Heart left ventricle (tissue), 16 donors: ENCODE measurements at regions of chr17 and their contacts with region 1.

Region 1: GRCh38 chr17:17001874-17002520 is 30.1 kb upstream of the TNFRSF13B start:
- DNase-seq: peak; percentile 69 to 90 (median 77)
- ATAC-seq: peak; percentile 80 to 90 (median 84)
- H3K4me3 ChIP-seq: peak overlapping the region in 1 of 12 donors; percentile 2
- H3K27ac ChIP-seq: peak overlapping the region in 1 of 12 donors; percentile 9
- H3K4me1 ChIP-seq: peaks cover 0 to 8% (median 6%) of the 10 kb centered on the region in 12 donors
- H3K27me3 ChIP-seq: no peaks in the 10 kb centered on the region
- CTCF ChIP-seq: peak in 11 of 12 donors; percentile 95 to 100 (median 98)
- POLR2A ChIP-seq: no peak

Region 2: DNA sequence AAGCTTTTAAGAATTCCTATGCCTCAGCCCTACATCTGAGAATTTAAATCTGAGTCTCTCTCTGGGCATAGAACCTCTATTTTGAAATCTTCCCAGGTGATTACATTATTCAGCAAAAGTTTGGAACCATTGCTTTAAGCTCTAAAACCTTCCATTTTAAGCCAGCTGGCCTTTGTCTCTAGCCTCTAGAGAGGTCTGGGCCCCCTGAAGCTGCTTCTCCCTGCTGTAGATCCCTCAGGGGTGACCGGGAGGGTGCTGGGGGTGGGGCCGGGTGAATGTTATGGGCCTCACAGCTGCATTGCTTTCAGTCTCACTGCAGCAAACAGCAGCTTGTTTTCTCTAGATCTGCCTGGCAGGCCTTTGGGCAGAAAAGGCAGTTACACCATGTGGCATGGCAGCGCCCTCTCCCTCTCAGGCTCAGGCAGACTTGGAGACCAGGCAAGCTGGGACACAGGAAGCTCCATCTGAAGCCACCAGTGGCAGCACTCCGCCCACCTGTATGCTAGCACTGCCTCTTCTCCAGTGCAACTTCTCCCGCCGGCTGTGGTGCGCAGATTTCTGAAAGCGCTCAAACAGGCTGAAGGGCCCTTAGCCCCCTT is 106.6 kb after region 1 on chr17:
- intact Hi-C with region 1: loop called in 2 of 10 experiments (anchors 10 kb)
- DNase-seq: no peak
- ATAC-seq: peak in 2 of 4 donors; percentile 21 to 27
- H3K4me3 ChIP-seq: no peak overlapping the region
- H3K27ac ChIP-seq: peak overlapping the region in 11 of 12 donors; percentile 56 to 83 (median 69)
- H3K4me1 ChIP-seq: peaks cover 30 to 100% (median 90%) of the 10 kb centered on the region in 12 donors
- H3K27me3 ChIP-seq: no peaks in the 10 kb centered on the region
- CTCF ChIP-seq: no peak
- POLR2A ChIP-seq: no peak

Region 3: GRCh38 chr17:17141860-17142552 is 140.0 kb after region 1 on chr17:
- intact Hi-C with region 1: loop called in 8 of 10 experiments (anchors 5 to 10 kb)
- DNase-seq: no peak
- ATAC-seq: peak in 2 of 4 donors; percentile 48 to 55
- H3K4me3 ChIP-seq: no peak overlapping the region
- H3K27ac ChIP-seq: peak overlapping the region in 7 of 12 donors; percentile 15 to 46 (median 25)
- H3K4me1 ChIP-seq: peaks cover 0 to 44% (median 20%) of the 10 kb centered on the region in 12 donors
- H3K27me3 ChIP-seq: no peaks in the 10 kb centered on the region
- CTCF ChIP-seq: peak; percentile 71 to 88 (median 78)
- POLR2A ChIP-seq: no peak

Region 4: GRCh38 chr17:17237026-17237799 is 235.2 kb after region 1 on chr17 and contains the start of gene FLCN:
- intact Hi-C with region 1: loop called in 3 of 10 experiments (anchors 2 to 5 kb)
- DNase-seq: peak; percentile 93 to 96 (median 93)
- ATAC-seq: peak; percentile 90 to 96 (median 94)
- H3K4me3 ChIP-seq: peak within 1 kb of the TSS; percentile 77 to 100 (median 96)
- H3K27ac ChIP-seq: peak within 1 kb of the TSS; percentile 92 to 99 (median 94)
- H3K4me1 ChIP-seq: peaks cover 0 to 50% (median 29%) of the 10 kb centered on the region in 12 donors
- H3K27me3 ChIP-seq: no peaks in the 10 kb centered on the region
- CTCF ChIP-seq: no peak
- POLR2A ChIP-seq: peak in 1 of 2 donors; percentile 79
- total RNA-seq, gene FLCN: 26.5 to 120 (median 32.6) TPM

Region 5: GRCh38 chr17:17280613-17281549 is 278.9 kb after region 1 on chr17 and contains the start of gene COPS3:
- intact Hi-C with region 1: loop called in 2 of 10 experiments (anchors 10 kb)
- DNase-seq: peak; percentile 99
- ATAC-seq: peak; percentile 93 to 97 (median 97)
- H3K4me3 ChIP-seq: peak within 1 kb of the TSS; percentile 65 to 100 (median 92)
- H3K27ac ChIP-seq: peak within 1 kb of the TSS; percentile 94 to 99 (median 98)
- H3K4me1 ChIP-seq: peaks cover 5 to 46% (median 24%) of the 10 kb centered on the region in 12 donors
- H3K27me3 ChIP-seq: no peaks in the 10 kb centered on the region
- CTCF ChIP-seq: peak in 2 of 12 donors; percentile 13 to 20
- POLR2A ChIP-seq: peak in 1 of 2 donors; percentile 64
- total RNA-seq, gene COPS3: 65.8 to 87.7 (median 74.0) TPM

Region 6: GRCh38 chr17:17313350-17313991 is 311.5 kb after region 1 on chr17:
- intact Hi-C with region 1: loop called in 7 of 10 experiments (anchors 2 to 10 kb)
- DNase-seq: peak in 2 of 5 donors; percentile 43
- ATAC-seq: peak in 3 of 4 donors; percentile 57 to 71 (median 66)
- H3K4me3 ChIP-seq: no peak overlapping the region
- H3K27ac ChIP-seq: no peak overlapping the region
- H3K4me1 ChIP-seq: no peaks in the 10 kb centered on the region
- H3K27me3 ChIP-seq: no peaks in the 10 kb centered on the region
- CTCF ChIP-seq: peak; percentile 29 to 58 (median 45)
- POLR2A ChIP-seq: no peak

Region 7: GRCh38 chr17:17356149-17356930 is 354.3 kb after region 1 on chr17:
- intact Hi-C with region 1: no loop called
- DNase-seq: peak; percentile 73 to 83 (median 74)
- ATAC-seq: peak; percentile 61 to 78 (median 70)
- H3K4me3 ChIP-seq: no peak overlapping the region
- H3K27ac ChIP-seq: no peak overlapping the region
- H3K4me1 ChIP-seq: peaks cover 0 to 27% (median 12%) of the 10 kb centered on the region in 12 donors
- H3K27me3 ChIP-seq: no peaks in the 10 kb centered on the region
- CTCF ChIP-seq: peak; percentile 94 to 100 (median 98)
- POLR2A ChIP-seq: no peak